Naive thymus-derived CD4-positive, alpha-beta T cell (primary cell): ENCODE measurements at regions of chrX and their contacts with region 1.

Region 1: DNA sequence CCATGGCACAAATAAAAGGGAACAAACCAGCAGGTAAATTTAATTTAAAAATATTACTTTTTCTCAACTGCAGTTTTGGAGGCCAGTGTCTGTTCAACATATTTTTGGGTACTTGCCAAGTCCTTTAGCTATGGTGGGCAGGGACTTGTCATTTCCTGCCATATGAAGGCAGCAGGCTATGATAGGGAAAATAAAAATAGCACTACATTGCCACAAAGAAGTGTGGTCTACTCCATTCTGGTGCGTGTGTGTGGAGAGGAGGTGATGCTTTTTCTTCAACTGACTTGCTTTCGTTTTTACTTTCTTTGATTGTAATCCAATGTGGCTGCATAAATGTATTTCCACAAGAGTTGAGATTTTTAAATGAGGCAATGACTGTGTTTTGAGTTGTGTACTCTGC is 17.2 kb downstream of the GPR174 start:
- DNase-seq: peak in 8 of 9 donors; percentile 22 to 85 (median 77)
- ATAC-seq: peak; percentile 95
- H3K4me3 ChIP-seq: peak overlapping the region; percentile 52
- H3K4me3 Mint-ChIP-seq: peak overlapping the region; percentile 80 to 96 (median 90)
- H3K27ac ChIP-seq: peak overlapping the region; percentile 76
- H3K27ac Mint-ChIP-seq: peak overlapping the region; percentile 95 to 99 (median 97)
- H3K4me1 ChIP-seq: peaks cover 48 to 50% of the 10 kb centered on the region in 2 donors
- H3K4me1 Mint-ChIP-seq: peaks cover 16 to 79% (median 68%) of the 10 kb centered on the region in 7 donors
- H3K27me3 ChIP-seq: no peaks in the 10 kb centered on the region
- H3K27me3 Mint-ChIP-seq: no peaks in the 10 kb centered on the region

Region 2: GRCh38 chrX:78327370-78328086 is 834.1 kb before region 1 on chrX and contains the start of gene CYSLTR1:
- CTCF ChIA-PET with region 1: no interaction called
- POLR2A ChIA-PET with region 1: no interaction called
- intact Hi-C with region 1: loop called in 1 of 2 experiments (anchors 5 kb)
- DNase-seq: no peak
- ATAC-seq: peak; percentile 44
- H3K4me3 ChIP-seq: peak within 1 kb of the TSS; percentile 47
- H3K4me3 Mint-ChIP-seq: peak within 1 kb of the TSS; percentile 78 to 97 (median 88)
- H3K27ac ChIP-seq: peak within 1 kb of the TSS; percentile 84
- H3K27ac Mint-ChIP-seq: peak within 1 kb of the TSS; percentile 82 to 99 (median 93)
- H3K4me1 ChIP-seq: peaks cover 9 to 23% of the 10 kb centered on the region in 2 donors
- H3K4me1 Mint-ChIP-seq: peaks cover 26 to 65% (median 62%) of the 10 kb centered on the region in 7 donors
- H3K27me3 ChIP-seq: no peaks in the 10 kb centered on the region
- H3K27me3 Mint-ChIP-seq: no peaks in the 10 kb centered on the region
- total RNA-seq, gene CYSLTR1: 13.7 to 71.9 (median 24.9) TPM

Region 3: GRCh38 chrX:79361192-79361870 is 199.7 kb after region 1 on chrX:
- CTCF ChIA-PET with region 1: no interaction called
- POLR2A ChIA-PET with region 1: interaction called, 5 read pairs
- intact Hi-C with region 1: loop called (anchors 5 kb)
- DNase-seq: peak in 7 of 9 donors; percentile 29 to 72 (median 56)
- ATAC-seq: peak; percentile 84
- H3K4me3 ChIP-seq: no peak overlapping the region
- H3K4me3 Mint-ChIP-seq: peak overlapping the region in 9 of 10 donors; percentile 29 to 92 (median 60)
- H3K27ac ChIP-seq: peak overlapping the region; percentile 63
- H3K27ac Mint-ChIP-seq: peak overlapping the region; percentile 66 to 94 (median 90)
- H3K4me1 ChIP-seq: peaks cover 3 to 11% of the 10 kb centered on the region in 2 donors
- H3K4me1 Mint-ChIP-seq: peaks cover 3 to 38% (median 31%) of the 10 kb centered on the region in 7 donors
- H3K27me3 ChIP-seq: no peaks in the 10 kb centered on the region
- H3K27me3 Mint-ChIP-seq: no peaks in the 10 kb centered on the region